ENCODE measurements at regions of chr20 and their contacts with region 1.

Region 1: GRCh38 chr20:35883778-35884540 is 70.3 kb downstream of the SCAND1 start:
- DNase-seq: peak; percentile 88
- H3K4me3 ChIP-seq: no peak overlapping the region
- H3K4me3 Mint-ChIP-seq: peak overlapping the region; percentile 13
- H3K27ac Mint-ChIP-seq: peak overlapping the region; percentile 68
- H3K4me1 ChIP-seq: peaks cover 14% of the 10 kb centered on the region
- H3K4me1 Mint-ChIP-seq: peaks cover 7% of the 10 kb centered on the region
- H3K27me3 ChIP-seq: no peaks in the 10 kb centered on the region
- H3K27me3 Mint-ChIP-seq: no peaks in the 10 kb centered on the region
- CTCF ChIP-seq: peak; percentile 94 to 96

Region 2: GRCh38 chr20:35511814-35512420 is 372.0 kb before region 1 on chr20:
- CTCF ChIA-PET with region 1: no interaction called
- POLR2A ChIA-PET with region 1: no interaction called
- intact Hi-C with region 1: loop called (anchors 5 kb)
- DNase-seq: peak in 1 of 2 experiments; percentile 68
- H3K4me3 ChIP-seq: no peak overlapping the region
- H3K4me3 Mint-ChIP-seq: no peak overlapping the region
- H3K27ac Mint-ChIP-seq: no peak overlapping the region
- H3K4me1 ChIP-seq: no peaks in the 10 kb centered on the region
- H3K4me1 Mint-ChIP-seq: no peaks in the 10 kb centered on the region
- H3K27me3 ChIP-seq: no peaks in the 10 kb centered on the region
- H3K27me3 Mint-ChIP-seq: no peaks in the 10 kb centered on the region
- CTCF ChIP-seq: peak; percentile 88 to 92

Region 3: GRCh38 chr20:35699127-35699975 is 184.6 kb before region 1 on chr20 and contains the starts of genes NFS1 and ROMO1:
- CTCF ChIA-PET with region 1: interaction called, 4 read pairs
- POLR2A ChIA-PET with region 1: interaction called, 11 read pairs
- intact Hi-C with region 1: loop called (anchors 1 kb)
- DNase-seq: peak; percentile 95 to 98
- H3K4me3 ChIP-seq: peak within 1 kb of the TSS; percentile 93
- H3K4me3 Mint-ChIP-seq: peak within 1 kb of the TSS; percentile 91
- H3K27ac Mint-ChIP-seq: peak within 1 kb of the TSS; percentile 85
- H3K4me1 ChIP-seq: peaks cover 22% of the 10 kb centered on the region
- H3K4me1 Mint-ChIP-seq: peaks cover 35% of the 10 kb centered on the region
- H3K27me3 ChIP-seq: no peaks in the 10 kb centered on the region
- H3K27me3 Mint-ChIP-seq: no peaks in the 10 kb centered on the region
- CTCF ChIP-seq: peak; percentile 32 to 52
- total RNA-seq, gene NFS1: 69.8 and 77.1 TPM in 2 replicates
- total RNA-seq, gene ROMO1: 354 and 357 TPM in 2 replicates

Region 4: DNA sequence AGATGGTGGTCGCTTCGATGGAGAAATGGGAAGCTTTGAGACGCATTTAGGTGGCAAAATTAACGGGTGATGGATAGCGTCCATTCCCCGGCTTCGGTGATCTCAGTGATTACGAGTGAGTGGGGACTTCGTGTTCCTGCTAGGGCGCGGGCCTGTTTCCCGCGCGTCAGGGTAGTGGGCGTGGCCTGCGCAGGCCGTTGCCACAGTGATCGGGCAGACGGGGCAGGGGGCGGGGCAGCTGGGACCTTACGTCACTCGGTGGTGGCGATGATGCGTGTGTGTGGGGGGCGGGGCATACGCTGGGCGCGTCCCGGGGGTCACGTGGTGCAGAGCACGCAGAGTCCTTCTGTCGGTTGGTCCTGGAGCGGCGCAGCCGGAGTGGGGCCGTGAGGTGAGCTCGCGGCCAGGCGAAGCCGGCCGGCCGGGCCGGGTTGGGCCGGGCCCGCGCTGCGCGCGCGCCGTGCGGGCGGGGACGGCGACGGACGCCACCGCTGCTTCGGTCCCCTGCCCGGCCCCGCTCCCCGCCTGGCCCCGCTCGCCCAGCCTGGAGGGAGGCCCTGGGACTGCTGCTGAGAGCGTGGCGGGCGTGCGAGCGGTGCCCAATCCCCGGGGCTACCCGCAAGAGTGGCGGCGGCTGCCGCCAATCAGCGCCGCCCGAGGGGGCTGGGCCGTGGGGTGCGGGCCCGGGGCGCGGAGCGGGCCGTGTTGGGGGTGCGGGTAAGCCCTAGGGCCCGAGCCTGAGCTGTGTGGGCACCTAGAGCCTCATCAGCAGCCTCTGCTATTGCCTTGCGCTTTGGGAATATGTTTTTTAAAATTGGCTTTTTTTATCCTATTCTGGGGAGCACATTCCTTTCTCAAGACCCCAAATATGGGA is 112.0 kb before region 1 on chr20 and contains the start of gene PHF20:
- CTCF ChIA-PET with region 1: interaction called, 4 read pairs
- POLR2A ChIA-PET with region 1: no interaction called
- intact Hi-C with region 1: loop called (anchors 2 kb)
- DNase-seq: peak; percentile 100
- H3K4me3 ChIP-seq: peak within 1 kb of the TSS; percentile 73
- H3K4me3 Mint-ChIP-seq: peak within 1 kb of the TSS; percentile 80
- H3K27ac Mint-ChIP-seq: peak within 1 kb of the TSS; percentile 90
- H3K4me1 ChIP-seq: peaks cover 58% of the 10 kb centered on the region
- H3K4me1 Mint-ChIP-seq: peaks cover 54% of the 10 kb centered on the region
- H3K27me3 ChIP-seq: no peaks in the 10 kb centered on the region
- H3K27me3 Mint-ChIP-seq: no peaks in the 10 kb centered on the region
- CTCF ChIP-seq: no peak
- total RNA-seq, gene PHF20: 101 and 109 TPM in 2 replicates

Region 5: DNA sequence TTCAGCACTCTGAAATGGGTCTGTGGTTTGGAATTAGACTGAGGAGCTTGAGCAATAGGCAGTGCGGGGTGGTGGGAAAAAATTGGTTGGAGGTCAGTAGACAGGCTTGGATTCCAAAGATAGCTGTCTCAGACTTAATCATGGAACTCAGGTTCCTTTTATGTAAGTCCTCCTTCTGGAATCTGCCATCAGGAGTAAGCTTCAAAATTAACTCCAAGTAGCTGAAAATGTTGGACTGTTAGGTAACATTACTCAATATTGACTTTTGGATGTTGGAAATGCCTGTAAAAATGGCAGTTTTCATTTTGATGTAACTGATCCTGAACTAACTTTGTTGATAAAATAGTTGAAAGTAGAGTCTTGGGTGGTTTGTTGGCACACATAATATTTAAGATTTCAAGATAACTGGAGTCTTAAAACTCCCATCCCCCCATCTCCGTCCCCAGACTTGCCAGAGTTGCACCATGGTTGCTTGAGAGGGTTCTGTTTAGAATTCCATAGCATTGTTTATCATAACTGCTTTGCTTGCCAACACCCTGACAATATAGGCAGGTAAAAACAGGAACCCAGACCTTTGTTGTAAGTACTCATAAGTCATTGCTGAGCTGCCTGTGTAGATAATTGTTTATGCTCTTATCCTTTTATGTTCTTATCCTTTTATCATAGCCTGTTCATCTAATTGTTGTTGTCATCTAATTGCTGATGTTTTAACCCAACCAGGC is 29.1 kb before region 1 on chr20:
- CTCF ChIA-PET with region 1: interaction called, 13 read pairs
- POLR2A ChIA-PET with region 1: no interaction called
- intact Hi-C with region 1: loop called (anchors 2 kb)
- DNase-seq: peak in 1 of 2 experiments; percentile 73
- H3K4me3 ChIP-seq: no peak overlapping the region
- H3K4me3 Mint-ChIP-seq: no peak overlapping the region
- H3K27ac Mint-ChIP-seq: peak overlapping the region; percentile 40
- H3K4me1 ChIP-seq: peaks cover 25% of the 10 kb centered on the region
- H3K4me1 Mint-ChIP-seq: peaks cover 35% of the 10 kb centered on the region
- H3K27me3 ChIP-seq: no peaks in the 10 kb centered on the region
- H3K27me3 Mint-ChIP-seq: no peaks in the 10 kb centered on the region
- CTCF ChIP-seq: no peak

Region 6: GRCh38 chr20:35963878-35964277 is 79.9 kb after region 1 on chr20:
- CTCF ChIA-PET with region 1: no interaction called
- POLR2A ChIA-PET with region 1: no interaction called
- intact Hi-C with region 1: no loop called
- DNase-seq: no peak
- H3K4me3 ChIP-seq: no peak overlapping the region
- H3K4me3 Mint-ChIP-seq: no peak overlapping the region
- H3K27ac Mint-ChIP-seq: no peak overlapping the region
- H3K4me1 ChIP-seq: peaks cover 7% of the 10 kb centered on the region
- H3K4me1 Mint-ChIP-seq: peaks cover 20% of the 10 kb centered on the region
- H3K27me3 ChIP-seq: no peaks in the 10 kb centered on the region
- H3K27me3 Mint-ChIP-seq: peaks cover 5% of the 10 kb centered on the region
- CTCF ChIP-seq: no peak

Measured in Caco-2 (cell line).